ENCODE measurements at regions of chr6 and their contacts with region 1.

Region 1: DNA sequence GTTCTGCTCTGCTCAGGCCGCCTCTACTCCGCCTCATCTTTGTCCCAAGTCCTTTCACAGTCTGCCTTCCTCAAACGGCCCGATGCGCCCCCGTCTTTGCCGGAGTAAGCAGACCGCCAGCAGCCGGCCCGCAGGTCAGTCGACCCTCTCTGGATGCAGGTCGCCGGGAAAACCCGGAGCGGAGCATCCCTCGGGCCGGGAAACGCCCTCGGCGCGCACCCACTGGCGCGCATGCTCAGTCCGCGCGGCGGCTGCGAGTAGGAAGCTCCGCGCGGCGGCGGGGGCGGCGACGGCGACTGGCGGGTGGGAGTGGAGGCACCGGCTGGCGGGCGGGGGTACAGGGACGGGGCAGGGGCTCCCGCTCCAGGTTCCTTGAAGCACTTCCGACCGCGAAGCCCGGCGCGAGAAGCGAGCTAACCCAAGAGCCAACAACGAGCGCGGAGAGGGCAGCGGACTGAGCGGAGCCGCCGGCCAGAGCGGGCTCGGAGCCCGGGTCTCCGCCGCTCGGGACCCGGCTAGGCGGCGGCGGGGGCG is at the start of gene LRRC1:
- DNase-seq: peak; percentile 88
- ATAC-seq: peak; percentile 72
- H3K4me3 ChIP-seq: peak within 1 kb of the TSS; percentile 92 to 98 (median 96)
- H3K27ac ChIP-seq: peak within 1 kb of the TSS; percentile 81
- H3K4me1 ChIP-seq: peaks cover 59% of the 10 kb centered on the region
- H3K27me3 ChIP-seq: no peaks in the 10 kb centered on the region; a peak in 1 of 5 replicates
- CTCF ChIP-seq: no peak
- EP300 ChIP-seq: 0 out of 4 replicates have a peak, but pooled peaks of 1 of the 2 experiments have one; percentile 24
- POLR2A ChIP-seq: peak; percentile 83 to 89
- RAD21 ChIP-seq: 0 out of 2 replicates have a peak, but pooled peaks have one; percentile 12
- total RNA-seq, gene LRRC1: 27.7 and 31.6 TPM in 2 replicates

Region 2: DNA sequence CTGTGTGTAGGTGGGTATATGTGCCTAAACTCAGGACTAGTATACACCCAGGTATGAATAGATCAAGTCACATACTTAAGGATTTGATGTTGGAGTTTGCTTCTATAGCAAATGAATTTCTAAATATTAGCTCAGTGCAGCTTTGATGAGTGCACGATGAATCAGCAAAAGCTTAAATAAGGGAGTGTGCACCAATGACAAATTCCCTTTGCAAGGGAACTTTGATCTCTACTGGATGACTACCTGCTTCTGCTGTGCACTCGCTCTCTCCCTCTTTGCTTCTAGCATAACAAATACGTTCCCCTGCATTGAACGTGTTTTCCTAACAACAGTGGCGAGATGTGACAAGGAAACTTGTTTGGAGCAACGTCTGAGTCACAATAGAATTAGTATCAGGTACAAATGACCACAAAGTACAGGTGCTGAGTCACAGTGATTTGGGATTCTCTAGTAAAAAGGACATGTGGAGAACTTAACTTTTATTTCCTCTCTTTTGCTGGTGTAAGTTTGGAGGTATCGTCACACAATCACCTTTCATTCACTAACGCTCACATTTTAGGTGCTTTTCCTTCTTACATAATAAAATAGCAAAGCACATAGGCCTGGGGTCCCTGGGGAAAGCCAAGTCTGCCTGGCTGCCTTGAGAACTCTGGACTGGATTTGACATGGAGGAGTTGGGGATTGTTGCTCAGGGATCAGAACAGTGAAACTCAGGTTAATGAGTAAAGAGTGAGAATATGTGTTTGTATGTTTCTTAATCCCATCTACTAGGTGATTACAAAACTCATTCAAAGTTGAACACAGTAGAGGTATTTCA is 178.9 kb before region 1 on chr6:
- CTCF ChIA-PET with region 1: no interaction called
- POLR2A ChIA-PET with region 1: interaction called, 7 read pairs
- in situ Hi-C with region 1: no loop called
- intact Hi-C with region 1: loop called (anchors 5 kb)
- DNase-seq: peak; percentile 100
- ATAC-seq: peak; percentile 95
- H3K4me3 ChIP-seq: peak overlapping the region; percentile 35 to 60 (median 44); a peak in 5 of 6 replicates
- H3K27ac ChIP-seq: peak overlapping the region; percentile 97
- H3K4me1 ChIP-seq: peaks cover 53% of the 10 kb centered on the region
- H3K27me3 ChIP-seq: no peaks in the 10 kb centered on the region
- CTCF ChIP-seq: no peak; the same call in 1 of the 2 replicates
- EP300 ChIP-seq: peak; percentile 96 to 97
- POLR2A ChIP-seq: peak; percentile 73 to 91
- RAD21 ChIP-seq: no peak; the same call in 1 of the 2 replicates

Region 3: GRCh38 chr6:53805725-53806124 is 10.9 kb after region 1 on chr6:
- CTCF ChIA-PET with region 1: no interaction called
- POLR2A ChIA-PET with region 1: interaction called, 15 read pairs
- in situ Hi-C with region 1: no loop called
- intact Hi-C with region 1: loop called (anchors 2 kb)
- DNase-seq: no peak
- ATAC-seq: peak; percentile 45; the same call in 2 of the 3 replicates
- H3K4me3 ChIP-seq: no peak overlapping the region
- H3K27ac ChIP-seq: no peak overlapping the region
- H3K4me1 ChIP-seq: peaks cover 27% of the 10 kb centered on the region
- H3K27me3 ChIP-seq: no peaks in the 10 kb centered on the region; a peak in 1 of 5 replicates
- CTCF ChIP-seq: no peak
- EP300 ChIP-seq: no peak
- POLR2A ChIP-seq: no peak
- RAD21 ChIP-seq: no peak

Region 4: DNA sequence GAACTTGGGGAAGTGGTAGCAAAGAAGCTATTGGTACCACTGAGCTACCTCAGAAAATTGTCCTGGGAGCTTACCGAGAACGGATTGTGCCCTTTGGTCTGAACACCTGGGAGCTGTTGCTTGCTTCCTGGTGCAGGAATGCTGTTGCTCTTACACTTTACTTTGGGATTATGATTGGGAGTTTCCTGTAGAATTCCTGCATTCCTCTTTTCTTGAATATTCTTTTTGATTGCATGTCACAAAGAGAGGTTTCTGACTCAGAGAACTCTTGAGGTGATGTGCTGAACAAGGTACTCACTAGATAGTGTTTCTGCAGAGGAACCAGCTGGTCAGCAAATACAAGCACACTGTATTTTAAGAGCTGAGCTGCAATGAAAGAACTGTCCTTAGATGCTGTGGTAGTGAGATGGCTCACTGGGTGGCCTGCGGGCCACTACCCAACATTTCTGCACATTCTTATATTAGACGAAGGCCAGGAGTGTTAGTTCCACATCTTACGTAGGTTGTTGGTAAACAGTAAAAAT is 35.0 kb after region 1 on chr6:
- CTCF ChIA-PET with region 1: no interaction called
- POLR2A ChIA-PET with region 1: interaction called, 26 read pairs
- in situ Hi-C with region 1: no loop called
- intact Hi-C with region 1: no loop called
- DNase-seq: peak; percentile 63
- ATAC-seq: peak; percentile 96
- H3K4me3 ChIP-seq: peak overlapping the region in 2 of 3 experiments; percentile 15 to 19; a peak in 2 of 6 replicates
- H3K27ac ChIP-seq: peak overlapping the region; percentile 29
- H3K4me1 ChIP-seq: peaks cover 55% of the 10 kb centered on the region
- H3K27me3 ChIP-seq: no peaks in the 10 kb centered on the region
- CTCF ChIP-seq: no peak
- EP300 ChIP-seq: peak in 1 of 2 experiments; percentile 6; a peak in 1 of 4 replicates
- POLR2A ChIP-seq: no peak
- RAD21 ChIP-seq: no peak; the same call in 1 of the 2 replicates

Region 5: DNA sequence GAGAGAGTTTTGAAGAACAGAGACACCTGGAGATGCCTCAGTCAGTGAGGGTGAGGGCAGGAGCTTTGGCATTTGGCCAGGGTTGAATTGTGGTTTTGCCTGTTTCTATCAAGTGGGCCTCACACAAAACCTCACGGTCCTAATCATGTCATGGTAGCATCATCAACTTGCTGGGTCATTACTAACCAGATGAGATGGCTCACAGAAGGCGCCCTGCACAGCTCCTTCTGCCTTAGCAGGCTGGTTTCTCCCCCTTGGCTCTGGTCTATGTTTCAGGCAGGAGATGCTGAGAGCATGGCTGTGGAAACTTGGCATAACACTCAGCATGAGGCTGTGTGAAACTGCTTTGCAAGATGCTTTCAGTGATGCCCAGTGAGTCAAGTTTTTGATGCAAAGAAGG is 99.3 kb after region 1 on chr6:
- CTCF ChIA-PET with region 1: no interaction called
- POLR2A ChIA-PET with region 1: interaction called, 3 read pairs
- in situ Hi-C with region 1: no loop called
- intact Hi-C with region 1: loop called (anchors 10 kb)
- DNase-seq: no peak
- ATAC-seq: no peak
- H3K4me3 ChIP-seq: no peak overlapping the region
- H3K27ac ChIP-seq: no peak overlapping the region
- H3K4me1 ChIP-seq: 0 out of 2 replicates have a peak, but pooled peaks cover 7% of the 10 kb centered on the region
- H3K27me3 ChIP-seq: no peaks in the 10 kb centered on the region
- CTCF ChIP-seq: no peak
- EP300 ChIP-seq: no peak
- POLR2A ChIP-seq: no peak
- RAD21 ChIP-seq: no peak

Region 6: DNA sequence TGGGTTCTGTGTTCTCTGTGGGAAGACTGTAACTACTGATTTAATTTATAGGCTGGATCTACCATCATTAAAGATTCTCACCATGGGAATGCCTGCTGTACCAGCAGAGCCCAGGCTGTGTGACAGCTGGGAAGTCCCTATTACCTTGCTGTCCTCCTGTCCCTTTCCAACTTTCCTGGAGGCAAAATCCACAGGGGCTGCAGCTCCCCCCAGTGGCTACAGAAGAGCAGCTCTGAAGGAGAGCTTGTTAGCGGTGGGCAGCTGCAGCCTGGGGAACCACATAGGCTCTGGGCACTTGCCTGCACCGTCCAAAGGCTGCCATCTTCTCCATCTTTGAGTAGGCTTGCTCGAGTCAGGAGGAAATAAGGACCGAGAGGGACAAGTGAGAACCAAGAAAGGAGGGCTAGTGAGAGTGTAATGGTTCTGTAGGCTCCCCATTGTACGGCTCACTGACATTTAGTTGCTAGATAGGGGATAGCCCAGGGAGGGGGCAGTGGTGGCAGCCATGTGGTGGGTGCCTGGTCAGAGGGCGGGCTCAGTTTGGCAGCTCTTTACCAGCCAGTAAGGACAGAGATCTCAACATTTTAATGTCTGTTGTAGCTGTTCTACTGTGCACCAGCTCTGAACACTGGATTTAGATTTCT is 161.4 kb after region 1 on chr6:
- CTCF ChIA-PET with region 1: no interaction called
- POLR2A ChIA-PET with region 1: interaction called, 21 read pairs
- in situ Hi-C with region 1: loop called (anchors 5 kb)
- intact Hi-C with region 1: loop called (anchors 1 kb)
- DNase-seq: peak; percentile 79
- ATAC-seq: peak; percentile 100
- H3K4me3 ChIP-seq: no peak overlapping the region
- H3K27ac ChIP-seq: no peak overlapping the region
- H3K4me1 ChIP-seq: no peaks in the 10 kb centered on the region
- H3K27me3 ChIP-seq: no peaks in the 10 kb centered on the region; a peak in 1 of 5 replicates
- CTCF ChIP-seq: peak; percentile 98
- EP300 ChIP-seq: no peak
- POLR2A ChIP-seq: no peak
- RAD21 ChIP-seq: peak; percentile 92

Measured in HepG2 (cell line).